ENCODE measurements at regions of chr1 and their contacts with region 1.

Region 1: DNA sequence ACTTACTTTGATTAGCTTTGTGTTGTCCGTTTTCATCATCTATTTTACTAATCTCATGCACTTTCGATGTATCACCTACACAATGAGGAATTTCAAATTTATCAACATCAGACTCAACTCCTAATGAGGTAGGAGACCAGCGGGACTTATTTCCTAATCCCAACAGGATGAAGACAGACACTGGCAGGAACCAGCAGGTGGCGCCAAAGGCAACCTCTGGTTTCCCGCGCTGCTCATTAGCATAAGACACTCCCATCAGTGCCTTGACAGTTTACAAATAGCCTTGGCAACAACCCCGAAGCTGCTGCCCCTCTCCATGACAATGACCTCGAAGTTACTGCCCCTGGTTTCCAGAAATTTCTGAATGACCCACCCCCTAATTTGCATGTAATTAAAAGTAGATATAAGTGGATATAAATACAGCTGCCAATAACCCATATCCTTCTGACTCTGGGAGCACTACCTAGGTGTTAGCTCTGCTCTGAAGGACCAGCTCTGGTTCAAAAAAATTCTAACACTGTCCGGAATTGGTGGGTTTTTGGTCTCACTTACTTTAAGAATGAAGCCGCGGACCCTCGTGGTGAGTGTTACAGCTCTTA is 974.8 kb downstream of the ADGRL2 start:
- DNase-seq: no peak
- H3K4me3 Mint-ChIP-seq: no peak overlapping the region
- H3K27ac Mint-ChIP-seq: no peak overlapping the region
- H3K4me1 Mint-ChIP-seq: no peaks in the 10 kb centered on the region
- H3K27me3 Mint-ChIP-seq: peaks cover 2% of the 10 kb centered on the region

Region 2: DNA sequence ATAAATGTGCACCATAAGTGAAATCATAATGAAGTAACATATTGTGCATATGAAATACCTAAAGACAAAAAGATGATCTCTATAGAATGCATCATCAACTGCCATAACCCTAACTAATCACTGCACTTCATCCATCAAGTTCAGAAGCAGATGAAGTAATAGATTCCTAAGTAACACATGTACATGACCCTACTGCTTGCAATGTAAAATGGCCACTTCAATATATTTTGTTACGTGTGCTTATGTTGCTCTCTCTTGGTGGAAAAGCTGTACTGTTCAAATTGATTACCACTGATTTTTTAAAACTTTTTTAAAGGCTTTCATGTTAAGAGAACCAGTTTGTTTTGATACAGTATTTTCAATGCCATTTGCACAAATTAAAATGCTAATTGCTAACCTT is 1081.6 kb after region 1 on chr1:
- intact Hi-C with region 1: loop called (anchors 10 kb)
- DNase-seq: no peak
- H3K4me3 Mint-ChIP-seq: no peak overlapping the region
- H3K27ac Mint-ChIP-seq: no peak overlapping the region
- H3K4me1 Mint-ChIP-seq: peaks cover 8% of the 10 kb centered on the region
- H3K27me3 Mint-ChIP-seq: peaks cover 5% of the 10 kb centered on the region

Region 3: GRCh38 chr1:84319662-84320061 is 1544.2 kb after region 1 on chr1:
- intact Hi-C with region 1: no loop called
- DNase-seq: no peak
- H3K4me3 Mint-ChIP-seq: no peak overlapping the region
- H3K27ac Mint-ChIP-seq: no peak overlapping the region
- H3K4me1 Mint-ChIP-seq: peaks cover 6% of the 10 kb centered on the region
- H3K27me3 Mint-ChIP-seq: peaks cover 14% of the 10 kb centered on the region